B cell (primary cell): ENCODE measurements at regions of chr22 and their contacts with region 1.

Region 1: DNA sequence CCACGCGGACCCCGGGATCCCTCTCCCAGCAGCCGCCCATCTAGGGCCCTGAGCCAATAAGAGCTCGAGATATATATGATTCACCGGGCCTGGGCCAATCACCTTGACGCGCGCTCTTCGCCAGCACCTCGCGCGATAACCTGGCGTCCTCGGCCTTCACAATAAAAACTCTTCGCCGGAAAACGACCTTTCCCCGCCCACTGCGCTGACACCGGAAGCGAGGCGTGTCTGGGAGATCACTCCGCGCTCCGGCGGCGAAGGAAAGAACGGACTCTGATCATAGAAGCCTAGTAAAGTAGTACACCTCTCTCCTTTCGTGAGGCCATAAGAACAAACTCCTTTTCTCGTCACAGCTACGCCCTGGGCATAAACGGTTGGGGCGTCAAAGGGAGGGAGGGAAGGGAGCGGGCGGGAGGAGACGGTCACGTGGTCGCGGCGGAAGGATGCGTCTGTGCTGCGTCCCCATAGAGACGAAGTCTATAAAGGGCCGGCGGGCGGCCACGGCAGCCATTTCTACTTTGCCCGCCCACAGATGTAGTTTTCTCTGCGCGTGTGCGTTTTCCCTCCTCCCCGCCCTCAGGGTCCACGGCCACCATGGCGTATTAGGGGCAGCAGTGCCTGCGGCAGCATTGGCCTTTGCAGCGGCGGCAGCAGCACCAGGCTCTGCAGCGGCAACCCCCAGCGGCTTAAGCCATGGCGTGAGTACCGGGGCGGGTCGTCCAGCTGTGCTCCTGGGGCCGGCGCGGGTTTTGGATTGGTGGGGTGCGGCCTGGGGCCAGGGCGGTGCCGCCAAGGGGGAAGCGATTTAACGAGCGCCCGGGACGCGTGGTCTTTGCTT is at the start of gene ATF4:
- DNase-seq: peak; percentile 100
- ATAC-seq: peak; percentile 89
- H3K4me3 ChIP-seq: peak within 1 kb of the TSS; percentile 82 to 100 (median 99)
- H3K4me3 Mint-ChIP-seq: peak within 1 kb of the TSS; percentile 94
- H3K27ac ChIP-seq: peak within 1 kb of the TSS; percentile 91 to 95
- H3K27ac Mint-ChIP-seq: peak within 1 kb of the TSS; percentile 98
- H3K4me1 ChIP-seq: peaks cover 31 to 49% of the 10 kb centered on the region in 2 donors
- H3K4me1 Mint-ChIP-seq: peaks cover 59% of the 10 kb centered on the region
- H3K27me3 ChIP-seq: no peaks in the 10 kb centered on the region
- H3K27me3 Mint-ChIP-seq: no peaks in the 10 kb centered on the region
- CTCF ChIP-seq: no peak
- total RNA-seq, gene ATF4: 236 and 244 TPM in 2 replicates

Region 2: DNA sequence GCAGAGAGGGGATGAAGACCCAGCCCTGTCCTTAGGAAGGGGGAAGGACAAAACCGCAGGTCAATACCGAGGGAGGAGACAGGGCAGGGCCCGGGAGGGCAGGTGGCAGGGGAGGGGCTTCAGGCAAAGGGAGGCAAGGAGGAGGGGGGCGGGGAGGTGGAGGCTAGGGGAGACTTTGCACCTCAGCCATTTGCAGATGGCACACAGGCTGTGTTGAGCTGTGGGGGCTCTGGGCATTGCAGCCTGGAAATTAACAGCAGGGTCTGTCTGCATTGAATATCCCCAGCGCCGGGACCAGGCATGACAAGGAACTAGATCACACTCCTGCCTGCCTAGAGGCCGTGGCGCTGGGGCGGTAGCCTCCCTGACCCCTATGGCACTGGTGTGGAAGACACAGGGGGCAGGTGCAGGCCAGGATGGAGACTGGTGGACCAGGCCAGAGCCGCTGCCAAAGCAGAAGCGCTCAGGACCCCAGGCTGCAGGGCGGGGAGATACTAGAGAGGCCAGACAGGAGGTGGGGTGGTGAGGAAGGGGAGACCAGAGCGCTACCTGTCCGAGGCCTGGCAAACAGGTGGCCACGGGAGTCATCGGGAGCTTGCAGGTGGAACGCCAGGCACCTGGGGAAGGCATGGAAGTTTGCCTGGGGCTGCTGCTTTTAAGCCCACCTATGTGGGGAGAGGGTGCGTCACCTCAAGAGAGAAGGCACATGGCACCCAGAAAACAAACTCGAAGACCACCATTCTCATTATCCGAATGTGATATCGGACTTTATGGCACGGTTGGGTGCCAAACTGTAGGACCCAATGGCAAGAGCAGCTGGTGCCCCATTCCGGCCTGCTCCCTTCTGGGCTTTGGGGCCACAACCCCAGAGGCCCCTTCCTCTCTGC is 659.7 kb before region 1 on chr22:
- CTCF ChIA-PET with region 1: no interaction called
- POLR2A ChIA-PET with region 1: interaction called, 11 read pairs
- intact Hi-C with region 1: no loop called
- DNase-seq: no peak
- ATAC-seq: no peak
- H3K4me3 ChIP-seq: no peak overlapping the region
- H3K4me3 Mint-ChIP-seq: no peak overlapping the region
- H3K27ac ChIP-seq: no peak overlapping the region
- H3K27ac Mint-ChIP-seq: no peak overlapping the region
- H3K4me1 ChIP-seq: no peaks in the 10 kb centered on the region
- H3K4me1 Mint-ChIP-seq: peaks cover 4% of the 10 kb centered on the region
- H3K27me3 ChIP-seq: no peaks in the 10 kb centered on the region
- H3K27me3 Mint-ChIP-seq: peaks cover 6% of the 10 kb centered on the region
- CTCF ChIP-seq: no peak

Region 3: DNA sequence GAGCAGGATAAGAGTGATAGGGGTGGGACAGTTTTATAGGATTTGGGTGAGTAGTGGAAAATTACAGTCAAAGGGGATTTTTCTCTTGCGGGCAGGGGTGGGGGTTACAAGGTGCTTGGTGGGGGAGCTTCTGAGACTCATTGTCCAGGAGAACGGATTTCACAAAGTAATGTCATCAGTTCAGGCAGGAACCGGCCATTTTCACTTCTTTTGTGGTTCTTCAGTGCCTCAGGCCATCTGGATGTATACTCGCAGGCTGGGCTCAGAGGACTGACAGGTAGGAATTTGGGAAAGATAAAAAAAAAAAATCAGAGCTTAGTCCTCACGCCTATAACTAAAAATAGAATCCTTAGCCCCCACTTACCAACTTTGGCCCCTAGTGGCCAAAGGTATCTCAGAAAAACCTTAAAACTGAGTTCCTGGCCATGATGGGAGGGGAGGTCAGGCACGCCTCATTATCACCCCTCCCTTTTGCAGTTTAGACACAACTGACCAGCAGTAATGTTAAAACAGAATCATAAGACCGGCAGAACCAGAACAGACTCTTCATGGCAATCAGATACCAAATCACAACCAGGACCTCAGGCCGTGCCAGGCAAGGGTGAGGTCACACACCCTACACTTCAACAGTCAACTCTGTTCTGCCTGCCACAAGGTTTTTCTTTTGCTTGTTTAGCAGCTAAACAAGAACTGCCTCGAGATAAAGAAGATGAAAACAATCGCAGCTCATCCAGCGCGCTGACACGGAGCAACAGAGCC is 452.1 kb before region 1 on chr22:
- CTCF ChIA-PET with region 1: no interaction called
- POLR2A ChIA-PET with region 1: no interaction called
- intact Hi-C with region 1: no loop called
- DNase-seq: peak; percentile 42
- ATAC-seq: no peak
- H3K4me3 ChIP-seq: peak overlapping the region; percentile 50 to 99 (median 96)
- H3K4me3 Mint-ChIP-seq: no peak overlapping the region
- H3K27ac ChIP-seq: peak overlapping the region; percentile 97 to 98
- H3K27ac Mint-ChIP-seq: no peak overlapping the region
- H3K4me1 ChIP-seq: peaks cover 70 to 95% of the 10 kb centered on the region in 2 donors
- H3K4me1 Mint-ChIP-seq: peaks cover 45% of the 10 kb centered on the region
- H3K27me3 ChIP-seq: no peaks in the 10 kb centered on the region
- H3K27me3 Mint-ChIP-seq: no peaks in the 10 kb centered on the region
- CTCF ChIP-seq: peak; percentile 54

Region 4: DNA sequence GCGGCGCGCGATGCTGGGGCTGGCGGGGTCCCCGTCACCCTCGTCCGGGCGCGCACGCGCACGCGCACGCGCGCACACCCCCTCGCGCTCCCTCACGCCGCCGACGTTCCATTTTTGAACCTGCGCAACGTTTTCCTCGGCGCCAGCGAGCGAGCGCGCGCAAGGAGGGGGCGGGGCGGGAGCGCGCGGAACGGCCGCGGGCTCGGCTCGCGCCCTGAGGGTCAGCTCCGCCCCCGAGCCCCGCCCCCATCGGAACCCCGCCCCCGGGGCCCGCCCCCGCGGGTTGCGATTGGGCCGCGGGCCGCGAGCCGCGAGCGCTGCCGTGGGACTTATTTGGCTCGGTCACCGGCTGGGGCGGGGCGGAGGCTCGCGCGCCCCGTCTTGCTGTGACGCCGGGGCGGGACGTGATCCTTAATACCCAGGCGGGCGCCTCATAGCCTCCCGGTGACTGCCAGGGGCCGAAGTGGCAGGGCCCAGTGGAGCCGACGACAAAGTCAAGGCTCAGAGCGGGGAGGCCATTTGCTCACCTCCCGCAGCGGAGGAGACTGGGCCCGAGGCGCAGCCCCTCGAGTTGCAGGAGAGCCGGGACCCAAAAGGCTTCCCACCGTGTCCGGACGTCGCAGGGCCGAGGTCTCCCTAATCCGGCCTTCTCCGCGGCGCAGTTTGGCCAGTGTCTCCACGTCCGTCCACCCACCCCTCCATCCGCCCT is 367.6 kb before region 1 on chr22 and contains the start of gene CBX7:
- CTCF ChIA-PET with region 1: no interaction called
- POLR2A ChIA-PET with region 1: no interaction called
- intact Hi-C with region 1: loop called (anchors 1 kb)
- DNase-seq: peak; percentile 96
- ATAC-seq: peak; percentile 88
- H3K4me3 ChIP-seq: peak within 1 kb of the TSS; percentile 53 to 97 (median 87)
- H3K4me3 Mint-ChIP-seq: peak within 1 kb of the TSS; percentile 90
- H3K27ac ChIP-seq: peak within 1 kb of the TSS; percentile 81 to 97
- H3K27ac Mint-ChIP-seq: peak within 1 kb of the TSS; percentile 90
- H3K4me1 ChIP-seq: peaks cover 51 to 53% of the 10 kb centered on the region in 2 donors
- H3K4me1 Mint-ChIP-seq: peaks cover 43% of the 10 kb centered on the region
- H3K27me3 ChIP-seq: peaks cover 0 to 14% (median 8%) of the 10 kb centered on the region in 4 experiments
- H3K27me3 Mint-ChIP-seq: peaks cover 33% of the 10 kb centered on the region
- CTCF ChIP-seq: no peak
- total RNA-seq, gene CBX7: 141 and 147 TPM in 2 replicates

Region 5: DNA sequence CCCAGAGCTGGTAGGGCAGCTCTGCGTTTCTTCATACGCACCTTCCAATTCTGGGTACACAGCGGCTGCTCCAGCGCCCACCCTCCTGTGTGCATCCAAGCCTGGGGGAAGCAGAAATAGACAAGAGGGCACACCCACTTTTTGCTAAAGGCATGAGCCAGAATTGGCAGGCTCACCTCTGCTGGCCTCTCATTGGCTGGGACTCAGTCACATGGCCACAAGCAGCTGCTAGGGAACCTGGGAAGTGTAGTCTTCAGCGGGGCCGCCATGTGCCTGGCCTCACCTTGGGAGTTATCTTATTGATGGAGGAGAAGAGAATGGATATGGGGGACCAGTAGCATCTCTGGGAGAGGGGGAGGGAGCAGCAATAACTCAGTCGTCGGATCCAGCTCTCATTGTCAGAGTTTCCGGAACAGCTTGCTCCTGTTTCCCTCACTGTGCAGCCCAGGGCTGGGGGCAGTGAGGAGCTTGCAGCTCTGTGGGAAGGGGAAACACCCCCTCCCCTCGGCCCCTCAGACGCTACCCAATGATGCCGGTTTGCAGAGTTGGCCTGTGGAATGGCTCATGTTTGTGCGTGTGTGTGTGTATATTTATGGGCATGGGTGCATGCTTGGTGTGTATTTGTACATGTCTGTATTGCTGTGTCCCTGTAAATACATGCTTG is 30.0 kb before region 1 on chr22:
- CTCF ChIA-PET with region 1: interaction called, 83 read pairs
- POLR2A ChIA-PET with region 1: interaction called, 22 read pairs
- intact Hi-C with region 1: no loop called
- DNase-seq: peak; percentile 86
- ATAC-seq: peak; percentile 98
- H3K4me3 ChIP-seq: peak overlapping the region in 2 of 5 experiments; percentile 12 to 37
- H3K4me3 Mint-ChIP-seq: peak overlapping the region; percentile 59
- H3K27ac ChIP-seq: no peak overlapping the region
- H3K27ac Mint-ChIP-seq: peak overlapping the region; percentile 79
- H3K4me1 ChIP-seq: peaks cover 4 to 14% of the 10 kb centered on the region in 2 donors
- H3K4me1 Mint-ChIP-seq: peaks cover 21% of the 10 kb centered on the region
- H3K27me3 ChIP-seq: no peaks in the 10 kb centered on the region
- H3K27me3 Mint-ChIP-seq: no peaks in the 10 kb centered on the region
- CTCF ChIP-seq: no peak

Region 6: GRCh38 chr22:39496131-39496838 is 24.0 kb before region 1 on chr22:
- CTCF ChIA-PET with region 1: interaction called, 83 read pairs
- POLR2A ChIA-PET with region 1: interaction called, 3 read pairs
- intact Hi-C with region 1: no loop called
- DNase-seq: peak; percentile 62
- ATAC-seq: peak; percentile 75
- H3K4me3 ChIP-seq: no peak overlapping the region
- H3K4me3 Mint-ChIP-seq: no peak overlapping the region
- H3K27ac ChIP-seq: no peak overlapping the region
- H3K27ac Mint-ChIP-seq: peak overlapping the region; percentile 70
- H3K4me1 ChIP-seq: peaks cover 4 to 7% of the 10 kb centered on the region in 2 donors
- H3K4me1 Mint-ChIP-seq: peaks cover 16% of the 10 kb centered on the region
- H3K27me3 ChIP-seq: no peaks in the 10 kb centered on the region
- H3K27me3 Mint-ChIP-seq: no peaks in the 10 kb centered on the region
- CTCF ChIP-seq: peak; percentile 73

Region 7: DNA sequence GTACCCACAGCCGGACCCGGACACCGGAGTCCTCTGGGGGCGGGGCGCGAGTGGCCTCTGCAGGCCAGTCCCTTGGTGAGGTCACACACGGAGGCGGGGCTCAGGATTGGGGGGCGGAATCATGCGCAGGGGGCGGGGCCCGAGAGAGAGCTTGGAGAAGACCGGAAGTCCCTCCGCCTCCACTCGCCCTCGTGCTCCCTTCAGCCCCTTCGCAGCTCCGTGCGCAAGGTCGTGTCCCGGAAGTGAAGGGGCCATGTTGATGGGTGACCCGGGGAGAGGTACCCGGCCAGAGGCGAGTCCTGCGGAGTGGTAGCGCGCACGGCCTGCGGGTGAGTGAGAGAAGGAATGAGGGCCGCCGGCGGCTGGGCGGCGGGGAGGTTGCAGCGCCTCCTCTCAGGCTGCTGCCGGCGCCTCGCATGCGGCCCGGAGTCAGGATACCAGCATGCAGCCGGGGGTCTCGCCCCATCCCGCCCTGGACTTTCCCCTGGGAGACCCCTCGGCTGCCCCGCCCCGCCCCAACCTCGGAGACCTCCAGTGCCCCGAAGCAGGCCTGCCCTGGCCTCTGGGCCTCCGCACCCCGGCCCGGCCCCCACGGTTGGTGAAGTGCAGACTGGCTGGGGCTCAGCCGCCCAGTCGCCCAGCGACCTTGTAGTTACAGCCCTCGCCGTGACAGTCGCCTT is 18.0 kb before region 1 on chr22 and contains the start of gene MIEF1:
- CTCF ChIA-PET with region 1: interaction called, 83 read pairs
- POLR2A ChIA-PET with region 1: interaction called, 27 read pairs
- intact Hi-C with region 1: loop called (anchors 1 kb)
- DNase-seq: peak; percentile 93
- ATAC-seq: peak; percentile 98
- H3K4me3 ChIP-seq: peak within 1 kb of the TSS; percentile 48 to 85 (median 83)
- H3K4me3 Mint-ChIP-seq: peak within 1 kb of the TSS; percentile 96
- H3K27ac ChIP-seq: peak within 1 kb of the TSS; percentile 45 to 74
- H3K27ac Mint-ChIP-seq: peak within 1 kb of the TSS; percentile 93
- H3K4me1 ChIP-seq: peaks cover 16 to 25% of the 10 kb centered on the region in 2 donors
- H3K4me1 Mint-ChIP-seq: peaks cover 39% of the 10 kb centered on the region
- H3K27me3 ChIP-seq: no peaks in the 10 kb centered on the region
- H3K27me3 Mint-ChIP-seq: no peaks in the 10 kb centered on the region
- CTCF ChIP-seq: no peak
- total RNA-seq, gene MIEF1: 37.2 and 43.4 TPM in 2 replicates